ENCODE measurements at regions of chr3 and their contacts with region 1.

Region 1: GRCh38 chr3:102089904-102090492 is 240.7 kb downstream of the NFKBIZ start:
- DNase-seq: peak; percentile 38
- H3K4me3 ChIP-seq: no peak overlapping the region
- H3K27ac ChIP-seq: peak overlapping the region; percentile 58 to 75 (median 70)
- H3K4me1 ChIP-seq: peaks cover 15 to 55% (median 37%) of the 10 kb centered on the region in 4 donors
- H3K27me3 ChIP-seq: no peaks in the 10 kb centered on the region
- CTCF ChIP-seq: no peak
- EP300 ChIP-seq: peak; percentile 89
- POLR2A ChIP-seq: no peak

Region 2: DNA sequence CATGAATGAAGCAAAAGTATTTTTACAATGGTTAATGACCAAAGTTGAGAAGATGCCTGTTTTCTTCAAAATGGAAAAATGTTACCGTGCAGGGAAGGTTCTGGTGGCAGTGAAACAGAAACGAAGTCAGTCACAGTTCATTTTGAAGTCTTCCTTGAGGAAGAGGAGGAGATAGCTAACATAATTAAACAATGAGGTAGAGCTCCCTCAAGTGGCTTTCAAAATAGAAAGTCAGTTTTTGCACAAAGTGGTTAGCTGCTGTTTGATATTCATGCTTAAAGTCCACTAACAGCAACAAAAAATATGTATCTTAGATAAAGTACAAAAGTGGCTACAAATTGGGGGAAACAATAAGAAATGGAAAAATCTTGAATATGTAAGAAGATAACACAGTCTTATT is 1293.4 kb before region 1 on chr3:
- in situ Hi-C with region 1: no loop called
- intact Hi-C with region 1: no loop called
- DNase-seq: no peak
- H3K4me3 ChIP-seq: no peak overlapping the region
- H3K27ac ChIP-seq: no peak overlapping the region
- H3K4me1 ChIP-seq: peaks cover 0 to 3% (median 0%) of the 10 kb centered on the region in 4 donors
- H3K27me3 ChIP-seq: no peaks in the 10 kb centered on the region
- CTCF ChIP-seq: peak in 2 of 5 experiments; percentile 9 to 11
- EP300 ChIP-seq: no peak
- POLR2A ChIP-seq: no peak

Region 3: DNA sequence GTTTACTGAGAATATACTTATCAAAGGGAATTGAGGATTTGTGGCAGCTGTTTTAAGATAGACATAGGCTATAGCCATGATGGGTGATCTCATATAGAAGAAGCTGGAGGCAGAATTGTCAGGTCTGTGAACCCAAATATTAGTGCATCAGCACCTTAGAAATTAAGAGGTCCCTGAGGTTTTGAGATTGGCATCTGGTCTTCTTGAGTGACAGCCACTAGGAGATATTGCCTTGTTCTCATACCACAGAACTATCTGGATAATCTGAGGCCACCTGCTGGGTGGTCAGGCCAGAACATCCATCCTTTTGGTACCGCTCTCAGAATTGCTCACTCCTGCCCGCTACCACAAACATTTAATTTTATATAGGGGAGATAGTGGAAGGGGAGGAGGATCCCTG is 134.1 kb after region 1 on chr3:
- in situ Hi-C with region 1: loop called in 1 of 4 experiments (anchors 25 kb)
- intact Hi-C with region 1: no loop called
- DNase-seq: peak; percentile 15
- H3K4me3 ChIP-seq: no peak overlapping the region
- H3K27ac ChIP-seq: no peak overlapping the region
- H3K4me1 ChIP-seq: peaks cover 0 to 11% (median 0%) of the 10 kb centered on the region in 4 donors
- H3K27me3 ChIP-seq: no peaks in the 10 kb centered on the region
- CTCF ChIP-seq: peak; percentile 25 to 61 (median 33)
- EP300 ChIP-seq: no peak
- POLR2A ChIP-seq: no peak